ENCODE measurements at regions of chr12 and their contacts with region 1.

Region 1: DNA sequence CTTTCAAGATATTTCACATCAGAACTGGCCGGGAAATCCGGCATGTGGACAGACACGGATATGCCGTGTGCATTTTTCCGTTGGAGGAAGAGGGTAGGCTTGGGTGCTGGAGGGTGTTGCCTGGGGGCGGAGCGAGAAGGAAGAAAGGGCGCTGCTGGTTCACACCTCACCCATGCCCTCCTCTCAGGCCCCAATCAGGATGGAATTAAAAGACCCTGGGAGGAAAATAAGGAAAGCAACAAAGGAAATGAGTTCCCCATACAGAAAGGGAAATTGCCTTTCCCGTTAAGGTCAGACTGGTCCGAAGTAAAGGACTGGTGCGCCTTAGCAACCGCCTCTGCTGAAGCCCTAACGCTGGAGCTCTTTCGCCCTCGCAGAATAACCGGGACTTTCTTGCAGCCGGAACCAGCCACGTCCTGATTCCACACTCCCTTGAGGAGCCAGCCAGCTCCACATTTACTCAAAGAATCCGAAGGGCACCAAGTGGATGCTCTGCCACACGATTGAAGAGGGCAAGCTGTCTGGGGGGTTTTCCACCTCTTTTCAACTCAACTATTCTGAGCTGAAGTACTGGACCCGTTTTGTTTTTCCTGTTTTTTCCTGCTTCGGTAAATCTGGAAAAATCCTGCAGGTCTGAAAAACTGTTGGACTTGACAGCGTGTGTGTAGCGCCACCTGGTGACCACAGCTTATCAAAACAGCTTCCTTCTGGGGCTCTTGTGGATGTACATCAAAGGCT is 37.7 kb upstream of the BCL2L14 start:
- DNase-seq: peak; percentile 83 to 84
- H3K4me3 ChIP-seq: peak overlapping the region; percentile 15
- H3K4me1 ChIP-seq: peaks cover 10% of the 10 kb centered on the region
- H3K27me3 ChIP-seq: no peaks in the 10 kb centered on the region

Region 2: DNA sequence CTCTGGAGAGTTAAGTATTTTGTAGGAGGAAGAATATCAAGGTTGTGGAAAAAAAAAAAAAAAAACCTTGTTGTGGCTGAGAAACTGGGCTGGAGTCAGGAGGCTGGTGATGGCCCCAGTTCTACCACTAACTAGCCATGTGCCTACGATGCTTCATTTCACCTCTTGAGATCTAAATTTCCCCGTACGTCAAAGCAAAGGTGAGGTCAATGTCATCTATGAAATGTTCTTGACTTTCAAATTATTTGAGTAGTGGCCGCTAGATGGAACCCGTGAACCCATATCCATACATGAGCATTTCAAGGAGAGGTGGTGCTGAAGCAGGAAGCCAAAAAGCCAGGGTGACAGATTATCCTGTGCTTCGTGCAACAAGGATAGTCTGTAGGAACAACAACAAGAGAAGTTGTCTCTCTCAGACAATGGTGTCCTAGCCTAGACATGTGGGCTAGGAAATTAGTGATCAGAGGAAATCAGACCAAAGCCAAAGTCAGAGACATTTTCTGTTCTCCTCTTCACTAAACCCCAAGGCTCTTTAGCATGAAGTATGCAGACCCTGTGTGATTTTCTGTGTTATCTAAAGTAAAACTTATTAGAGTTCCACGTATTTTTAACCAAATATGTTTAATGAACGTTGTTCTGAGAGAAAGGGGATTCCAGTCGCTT is 479.0 kb before region 1 on chr12:
- in situ Hi-C with region 1: loop called (anchors 10 kb)
- DNase-seq: peak; percentile 61 to 75
- H3K4me3 ChIP-seq: no peak overlapping the region
- H3K4me1 ChIP-seq: peaks cover 2% of the 10 kb centered on the region
- H3K27me3 ChIP-seq: peaks cover 6% of the 10 kb centered on the region; the same call in 1 of the 2 replicates

Region 3: GRCh38 chr12:11581179-11581755 is 451.8 kb before region 1 on chr12:
- in situ Hi-C with region 1: loop called (anchors 5 kb)
- DNase-seq: peak; percentile 63 to 81
- H3K4me3 ChIP-seq: no peak overlapping the region
- H3K4me1 ChIP-seq: no peaks in the 10 kb centered on the region
- H3K27me3 ChIP-seq: no peaks in the 10 kb centered on the region; the same call in none of the 2 replicates

Region 4: DNA sequence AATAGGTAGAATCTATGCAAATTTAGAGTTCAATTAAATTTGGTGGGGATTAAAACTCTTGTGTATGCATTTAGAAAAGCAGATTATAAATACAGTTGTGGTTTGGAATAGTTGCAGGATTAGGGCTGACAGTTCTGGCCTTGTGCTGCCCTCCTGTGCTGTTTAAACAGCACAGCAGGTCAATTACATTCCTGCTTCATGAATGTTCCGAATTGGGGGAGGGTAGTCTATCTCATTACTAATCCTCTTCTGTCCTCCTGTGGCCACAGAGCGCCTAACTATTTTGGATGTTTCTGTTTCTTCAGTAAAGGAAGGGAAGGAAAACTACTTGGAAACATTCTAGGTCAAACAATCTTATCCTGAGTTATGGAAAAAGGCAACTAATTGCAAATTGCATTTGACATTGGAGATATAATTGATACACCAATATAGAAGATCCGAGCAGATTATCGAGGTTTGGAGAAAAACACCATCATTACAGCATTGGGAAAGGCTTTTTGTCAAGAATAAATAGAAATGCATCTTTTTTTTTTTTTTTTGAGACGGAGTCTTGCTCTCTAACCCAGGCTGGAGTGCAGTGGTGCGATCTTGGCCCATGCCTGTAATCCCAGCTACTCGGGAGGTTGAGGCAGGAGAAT is 671.7 kb after region 1 on chr12:
- in situ Hi-C with region 1: loop called (anchors 10 kb)
- DNase-seq: peak; percentile 75 to 94
- H3K4me3 ChIP-seq: no peak overlapping the region
- H3K4me1 ChIP-seq: peaks cover 14% of the 10 kb centered on the region
- H3K27me3 ChIP-seq: no peaks in the 10 kb centered on the region

Measured in HAP-1 (cell line).